Spleen (tissue), 13 donors: ENCODE measurements at regions of chr13 and their contacts with region 1.

Region 1: GRCh38 chr13:25574437-25575411 is 202.9 kb downstream of the ATP8A2 start:
- DNase-seq: no peak
- H3K4me3 ChIP-seq: no peak overlapping the region
- H3K27ac ChIP-seq: no peak overlapping the region
- H3K4me1 ChIP-seq: no peaks in the 10 kb centered on the region
- H3K27me3 ChIP-seq: peaks cover 0 to 53% (median 0%) of the 10 kb centered on the region in 7 donors
- CTCF ChIP-seq: peak; percentile 46 to 82 (median 67)
- POLR2A ChIP-seq: no peak

Region 2: GRCh38 chr13:26062844-26063444 is 488.2 kb after region 1 on chr13:
- intact Hi-C with region 1: loop called (anchors 5 kb)
- DNase-seq: no peak
- H3K4me3 ChIP-seq: no peak overlapping the region
- H3K27ac ChIP-seq: no peak overlapping the region
- H3K4me1 ChIP-seq: no peaks in the 10 kb centered on the region
- H3K27me3 ChIP-seq: peaks cover 0 to 7% (median 0%) of the 10 kb centered on the region in 7 donors
- CTCF ChIP-seq: peak in 9 of 11 experiments; percentile 35 to 56 (median 44)
- POLR2A ChIP-seq: no peak

Region 3: DNA sequence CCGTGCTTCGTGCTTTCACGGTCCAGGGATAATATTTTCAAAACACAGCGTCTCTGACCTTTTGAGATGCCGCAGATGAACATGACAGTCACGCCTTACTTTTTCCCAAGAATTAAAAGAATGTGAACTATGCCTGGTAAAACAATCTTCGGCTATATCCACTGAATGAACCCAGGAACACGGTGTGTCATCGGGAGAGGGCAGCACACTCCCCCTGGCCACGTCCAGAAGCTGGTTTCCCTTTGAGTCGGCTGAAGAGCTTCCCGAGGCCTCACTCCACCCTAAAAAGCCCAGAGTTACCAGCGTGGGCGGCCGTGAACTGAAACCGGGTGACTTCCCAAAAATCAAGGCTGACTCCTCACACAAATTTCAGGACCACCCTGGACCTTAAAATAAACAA is 500.0 kb after region 1 on chr13:
- intact Hi-C with region 1: loop called (anchors 5 kb)
- DNase-seq: no peak
- H3K4me3 ChIP-seq: no peak overlapping the region
- H3K27ac ChIP-seq: no peak overlapping the region
- H3K4me1 ChIP-seq: no peaks in the 10 kb centered on the region
- H3K27me3 ChIP-seq: peaks cover 0 to 43% (median 0%) of the 10 kb centered on the region in 7 donors
- CTCF ChIP-seq: no peak
- POLR2A ChIP-seq: no peak

Region 4: DNA sequence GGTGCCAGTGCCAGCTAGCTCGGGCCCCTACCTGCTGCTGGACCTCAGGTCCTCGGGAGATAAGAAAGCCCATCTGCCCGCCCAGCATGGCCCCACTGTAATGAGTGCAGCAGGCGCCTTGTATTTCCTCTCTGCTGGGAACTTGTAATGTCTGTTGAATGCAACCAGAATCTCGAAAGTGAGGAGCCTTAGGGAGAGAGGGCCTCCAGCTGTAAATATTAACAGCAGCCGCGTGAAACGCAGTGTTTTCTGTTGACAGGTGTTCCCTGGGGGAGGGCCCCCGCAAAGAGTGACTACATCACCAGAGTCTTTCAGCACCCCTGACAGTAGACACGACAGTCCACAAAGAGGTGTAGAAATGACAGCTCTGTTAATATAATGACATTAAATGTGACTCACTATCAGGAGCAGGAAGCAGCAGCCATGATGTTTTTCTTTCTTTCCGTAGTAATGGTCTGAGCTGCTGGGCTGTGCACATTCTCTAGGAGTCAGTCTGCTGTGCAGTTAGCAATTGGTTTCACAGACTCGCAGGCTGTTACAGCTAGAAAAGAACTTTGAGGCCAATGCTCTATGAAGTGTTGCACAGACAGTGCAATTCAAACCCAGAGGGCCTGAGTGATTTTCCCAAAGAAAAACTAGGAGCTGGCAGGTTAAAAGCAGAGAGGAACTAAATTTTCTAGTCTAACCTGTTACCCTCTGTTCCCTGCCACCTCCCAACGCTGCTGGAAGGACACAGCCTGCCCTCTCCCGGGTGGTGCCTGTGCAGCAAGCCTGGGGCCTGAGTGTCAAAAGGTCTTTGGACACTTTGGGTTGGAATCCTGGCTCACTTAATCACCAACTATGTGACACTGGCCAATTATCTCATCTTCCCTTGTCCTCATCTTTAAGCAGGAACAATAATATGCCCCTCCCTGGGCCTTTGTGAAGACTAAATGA is 924.2 kb after region 1 on chr13:
- intact Hi-C with region 1: loop called (anchors 10 kb)
- DNase-seq: no peak
- H3K4me3 ChIP-seq: no peak overlapping the region
- H3K27ac ChIP-seq: no peak overlapping the region
- H3K4me1 ChIP-seq: peaks cover 0 to 18% (median 7%) of the 10 kb centered on the region in 6 donors
- H3K27me3 ChIP-seq: peaks cover 0 to 29% (median 0%) of the 10 kb centered on the region in 7 donors
- CTCF ChIP-seq: no peak
- POLR2A ChIP-seq: no peak

Region 5: GRCh38 chr13:26707122-26708006 is 1132.6 kb after region 1 on chr13:
- intact Hi-C with region 1: loop called (anchors 10 kb)
- DNase-seq: no peak
- H3K4me3 ChIP-seq: no peak overlapping the region
- H3K27ac ChIP-seq: no peak overlapping the region
- H3K4me1 ChIP-seq: no peaks in the 10 kb centered on the region
- H3K27me3 ChIP-seq: peaks cover 0 to 22% (median 0%) of the 10 kb centered on the region in 7 donors
- CTCF ChIP-seq: peak in 9 of 11 experiments; percentile 20 to 66 (median 51)
- POLR2A ChIP-seq: no peak